ENCODE measurements at regions of chr11 and their contacts with region 1.

Region 1: GRCh38 chr11:355581-356458 is 13.5 kb upstream of the B4GALNT4 start:
- DNase-seq: peak; percentile 85
- H3K4me3 Mint-ChIP-seq: peak overlapping the region; percentile 86
- H3K27ac Mint-ChIP-seq: peak overlapping the region; percentile 94
- H3K4me1 Mint-ChIP-seq: peaks cover 27% of the 10 kb centered on the region
- H3K27me3 Mint-ChIP-seq: peaks cover 2% of the 10 kb centered on the region

Region 2: GRCh38 chr11:269146-269890 is 86.5 kb before region 1 on chr11:
- intact Hi-C with region 1: loop called (anchors 5 kb)
- DNase-seq: peak; percentile 55
- H3K4me3 Mint-ChIP-seq: peak overlapping the region; percentile 89
- H3K27ac Mint-ChIP-seq: peak overlapping the region; percentile 97
- H3K4me1 Mint-ChIP-seq: peaks cover 34% of the 10 kb centered on the region
- H3K27me3 Mint-ChIP-seq: peaks cover 8% of the 10 kb centered on the region

Region 3: GRCh38 chr11:326842-327580 is 28.8 kb before region 1 on chr11:
- intact Hi-C with region 1: loop called (anchors 2 kb)
- DNase-seq: no peak
- H3K4me3 Mint-ChIP-seq: peak overlapping the region; percentile 71
- H3K27ac Mint-ChIP-seq: peak overlapping the region; percentile 94
- H3K4me1 Mint-ChIP-seq: peaks cover 64% of the 10 kb centered on the region
- H3K27me3 Mint-ChIP-seq: no peaks in the 10 kb centered on the region

Measured in activated T-helper 2 cell treated with anti-CD3 and anti-CD28 coated beads, Interferon-gamma antibody, Interleukin-2, Interleukin-4, amounts not matched to agents 10 μg/mL and 5 μg/mL and 100 μg/mL, durations not matched to agents 14 hours and 24 hours and 36 hours (primary cell).